Posterior vena cava (tissue), 2 donors: ENCODE measurements at regions of chr2 and their contacts with region 1.

Region 1: GRCh38 chr2:215207791-215208367 is 69.5 kb upstream of the ABCA12 start:
- DNase-seq: no peak

Region 2: GRCh38 chr2:215171151-215171550 is 36.7 kb before region 1 on chr2:
- intact Hi-C with region 1: loop called in 1 of 2 experiments (anchors 1 kb)
- DNase-seq: no peak